K562 (cell line): ENCODE measurements at regions of chr16 and their contacts with region 1.

Region 1: GRCh38 chr16:58815181-58815888 is 81.2 kb upstream of the GOT2 start:
- DNase-seq: no peak
- ATAC-seq: no peak
- H3K4me3 ChIP-seq: no peak overlapping the region
- H3K27ac ChIP-seq: no peak overlapping the region
- H3K4me1 ChIP-seq: peaks cover 0 to 3% of the 10 kb centered on the region in 2 experiments; a peak in 2 of 5 replicates
- H3K27me3 ChIP-seq: no peaks in the 10 kb centered on the region
- CTCF ChIP-seq: no peak
- EP300 ChIP-seq: no peak
- POLR2A ChIP-seq: no peak
- RAD21 ChIP-seq: no peak

Region 2: GRCh38 chr16:58425756-58426494 is 389.4 kb before region 1 on chr16:
- CTCF ChIA-PET with region 1: no interaction called
- POLR2A ChIA-PET with region 1: no interaction called
- in situ Hi-C with region 1: no loop called
- intact Hi-C with region 1: no loop called
- DNase-seq: no peak
- ATAC-seq: no peak
- H3K4me3 ChIP-seq: no peak overlapping the region
- H3K27ac ChIP-seq: no peak overlapping the region
- H3K4me1 ChIP-seq: no peaks in the 10 kb centered on the region; a peak in 1 of 5 replicates
- H3K27me3 ChIP-seq: peaks cover 37 to 41% of the 10 kb centered on the region in 2 experiments; a peak in 4 of 5 replicates
- CTCF ChIP-seq: no peak
- EP300 ChIP-seq: no peak
- POLR2A ChIP-seq: no peak
- RAD21 ChIP-seq: no peak

Region 3: DNA sequence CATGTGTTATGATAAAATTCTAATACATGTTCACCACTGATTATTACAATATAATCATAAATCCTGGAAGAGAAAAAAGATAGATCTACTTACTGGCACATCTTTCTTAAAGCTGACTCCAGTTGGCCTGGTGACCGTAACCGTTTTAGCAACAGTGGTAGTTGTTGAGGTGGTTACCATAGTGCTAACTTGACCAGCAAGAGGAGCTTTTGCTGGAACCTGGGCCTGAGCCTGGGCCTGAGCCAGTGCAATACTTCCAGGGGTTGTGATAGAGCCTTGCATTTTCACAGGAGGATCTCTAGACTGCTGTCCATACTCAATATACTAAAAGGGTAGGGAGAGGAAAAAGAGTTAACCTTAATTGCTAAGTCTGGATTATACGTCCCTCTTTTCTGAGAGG is 263.8 kb before region 1 on chr16:
- CTCF ChIA-PET with region 1: no interaction called
- POLR2A ChIA-PET with region 1: no interaction called
- in situ Hi-C with region 1: no loop called
- intact Hi-C with region 1: no loop called
- DNase-seq: no peak
- ATAC-seq: no peak; the same call in 2 of the 3 replicates
- H3K4me3 ChIP-seq: no peak overlapping the region
- H3K27ac ChIP-seq: no peak overlapping the region
- H3K4me1 ChIP-seq: no peaks in the 10 kb centered on the region
- H3K27me3 ChIP-seq: no peaks in the 10 kb centered on the region
- CTCF ChIP-seq: no peak
- EP300 ChIP-seq: no peak
- POLR2A ChIP-seq: no peak
- RAD21 ChIP-seq: no peak

Region 4: DNA sequence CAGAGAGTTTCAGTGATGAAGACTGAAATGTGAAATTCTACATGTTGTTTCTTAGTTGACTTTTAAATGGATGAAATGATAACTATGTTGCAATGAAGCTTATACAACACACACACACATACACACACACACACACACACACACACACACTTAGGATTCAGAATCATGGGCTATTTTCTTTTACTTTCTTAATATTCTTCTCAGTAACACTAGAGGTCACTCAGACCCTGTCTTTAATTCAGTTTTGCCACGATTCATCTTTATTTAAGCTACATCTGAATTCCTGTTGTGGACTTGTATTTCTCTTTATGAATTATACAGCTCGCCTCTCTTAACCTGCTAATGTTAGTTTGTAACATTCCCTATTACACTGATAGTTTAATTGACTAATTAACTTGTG is 28.3 kb after region 1 on chr16:
- CTCF ChIA-PET with region 1: no interaction called
- POLR2A ChIA-PET with region 1: no interaction called
- in situ Hi-C with region 1: no loop called
- intact Hi-C with region 1: loop called (anchors 1 kb)
- DNase-seq: peak; percentile 15 to 53 (median 27)
- ATAC-seq: peak; percentile 80
- H3K4me3 ChIP-seq: no peak overlapping the region
- H3K27ac ChIP-seq: no peak overlapping the region
- H3K4me1 ChIP-seq: no peaks in the 10 kb centered on the region
- H3K27me3 ChIP-seq: no peaks in the 10 kb centered on the region
- CTCF ChIP-seq: peak; percentile 26 to 61 (median 38); a peak in 4 of 6 replicates
- EP300 ChIP-seq: no peak
- POLR2A ChIP-seq: no peak
- RAD21 ChIP-seq: peak; percentile 59 to 79

Region 5: DNA sequence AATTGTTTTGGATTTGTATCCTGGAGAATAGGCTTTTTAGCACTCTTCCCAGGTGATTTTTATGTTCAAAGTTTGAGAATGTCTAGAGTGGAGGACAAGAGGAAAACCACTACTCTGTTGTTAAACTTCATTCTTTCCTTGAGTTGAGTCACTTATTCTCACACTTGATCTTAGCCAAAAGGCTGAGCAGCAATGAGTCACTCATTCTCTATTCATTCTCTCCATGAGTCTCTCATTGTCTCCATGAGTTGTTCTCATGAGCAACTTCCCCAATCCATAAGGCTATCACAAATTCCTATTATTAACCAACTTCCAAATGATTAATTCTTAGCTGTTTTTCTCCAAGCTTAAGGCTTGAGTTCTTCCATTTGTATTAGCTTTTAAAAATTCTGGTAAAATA is 1827.6 kb after region 1 on chr16:
- CTCF ChIA-PET with region 1: no interaction called
- POLR2A ChIA-PET with region 1: no interaction called
- in situ Hi-C with region 1: no loop called
- intact Hi-C with region 1: no loop called
- DNase-seq: no peak
- ATAC-seq: no peak
- H3K4me3 ChIP-seq: no peak overlapping the region
- H3K27ac ChIP-seq: no peak overlapping the region
- H3K4me1 ChIP-seq: no peaks in the 10 kb centered on the region
- H3K27me3 ChIP-seq: no peaks in the 10 kb centered on the region
- CTCF ChIP-seq: no peak
- EP300 ChIP-seq: no peak
- POLR2A ChIP-seq: no peak
- RAD21 ChIP-seq: no peak